ENCODE measurements at regions of chr4 and their contacts with region 1.

Region 1: GRCh38 chr4:57184378-57185029 is 74.3 kb upstream of the IGFBP7 start:
- DNase-seq: no peak
- ATAC-seq: no peak
- H3K4me3 ChIP-seq: no peak overlapping the region
- H3K27ac ChIP-seq: no peak overlapping the region
- H3K4me1 ChIP-seq: peaks cover 0 to 4% (median 0%) of the 10 kb centered on the region in 12 donors
- H3K27me3 ChIP-seq: no peaks in the 10 kb centered on the region
- CTCF ChIP-seq: no peak
- POLR2A ChIP-seq: no peak

Region 2: DNA sequence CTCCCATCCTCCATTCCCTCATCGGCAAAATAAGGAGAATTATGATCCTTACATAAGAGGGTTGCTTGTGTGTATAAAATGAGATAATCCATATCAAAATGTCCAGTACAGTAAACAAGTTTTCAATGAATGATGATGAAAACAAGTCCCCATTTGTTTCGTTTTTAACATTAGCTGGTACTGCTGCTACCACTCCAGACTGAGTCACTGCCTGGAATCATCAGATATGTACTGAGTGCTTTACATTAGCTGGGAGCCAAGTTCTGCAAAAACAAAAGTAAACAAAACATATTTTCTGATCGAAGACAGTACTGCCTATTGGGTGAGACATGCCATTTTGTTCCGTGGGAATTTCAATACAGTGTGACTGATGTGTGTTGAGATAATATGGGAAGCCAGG is 48.9 kb after region 1 on chr4:
- intact Hi-C with region 1: loop called in 1 of 10 experiments (anchors 2 kb)
- DNase-seq: no peak
- ATAC-seq: peak in 1 of 4 donors; percentile 52
- H3K4me3 ChIP-seq: no peak overlapping the region
- H3K27ac ChIP-seq: no peak overlapping the region
- H3K4me1 ChIP-seq: no peaks in the 10 kb centered on the region
- H3K27me3 ChIP-seq: peaks cover 0 to 5% (median 0%) of the 10 kb centered on the region in 9 donors
- CTCF ChIP-seq: no peak
- POLR2A ChIP-seq: no peak

Region 3: GRCh38 chr4:57318698-57319097 is 134.2 kb after region 1 on chr4:
- intact Hi-C with region 1: no loop called
- DNase-seq: no peak
- ATAC-seq: no peak
- H3K4me3 ChIP-seq: no peak overlapping the region
- H3K27ac ChIP-seq: no peak overlapping the region
- H3K4me1 ChIP-seq: no peaks in the 10 kb centered on the region
- H3K27me3 ChIP-seq: peaks cover 0 to 3% (median 0%) of the 10 kb centered on the region in 9 donors
- CTCF ChIP-seq: no peak
- POLR2A ChIP-seq: no peak

Measured in heart left ventricle (tissue), 16 donors.